ENCODE measurements at regions of chrX and their contacts with region 1.

Region 1: GRCh38 chrX:80237072-80237471 is 183.2 kb upstream of the TENT5D start:
- DNase-seq: no peak
- H3K4me3 ChIP-seq: no peak overlapping the region
- H3K27ac ChIP-seq: no peak overlapping the region
- H3K4me1 ChIP-seq: no peaks in the 10 kb centered on the region
- H3K27me3 ChIP-seq: no peaks in the 10 kb centered on the region
- CTCF ChIP-seq: peak in 2 of 3 experiments; percentile 12 to 30; a peak in 2 of 4 replicates
- EP300 ChIP-seq: no peak
- POLR2A ChIP-seq: no peak
- RAD21 ChIP-seq: peak; percentile 35 to 45; a peak in 3 of 4 replicates

Region 2: GRCh38 chrX:80285131-80285773 is 48.2 kb after region 1 on chrX:
- CTCF ChIA-PET with region 1: interaction called, 13 read pairs
- POLR2A ChIA-PET with region 1: no interaction called
- DNase-seq: peak; percentile 9 to 44
- H3K4me3 ChIP-seq: no peak overlapping the region
- H3K27ac ChIP-seq: no peak overlapping the region
- H3K4me1 ChIP-seq: no peaks in the 10 kb centered on the region
- H3K27me3 ChIP-seq: no peaks in the 10 kb centered on the region
- CTCF ChIP-seq: peak; percentile 9 to 62 (median 60)
- EP300 ChIP-seq: no peak
- POLR2A ChIP-seq: no peak
- RAD21 ChIP-seq: peak; percentile 81 to 83